ENCODE measurements at regions of chr2 and their contacts with region 1.

Region 1: DNA sequence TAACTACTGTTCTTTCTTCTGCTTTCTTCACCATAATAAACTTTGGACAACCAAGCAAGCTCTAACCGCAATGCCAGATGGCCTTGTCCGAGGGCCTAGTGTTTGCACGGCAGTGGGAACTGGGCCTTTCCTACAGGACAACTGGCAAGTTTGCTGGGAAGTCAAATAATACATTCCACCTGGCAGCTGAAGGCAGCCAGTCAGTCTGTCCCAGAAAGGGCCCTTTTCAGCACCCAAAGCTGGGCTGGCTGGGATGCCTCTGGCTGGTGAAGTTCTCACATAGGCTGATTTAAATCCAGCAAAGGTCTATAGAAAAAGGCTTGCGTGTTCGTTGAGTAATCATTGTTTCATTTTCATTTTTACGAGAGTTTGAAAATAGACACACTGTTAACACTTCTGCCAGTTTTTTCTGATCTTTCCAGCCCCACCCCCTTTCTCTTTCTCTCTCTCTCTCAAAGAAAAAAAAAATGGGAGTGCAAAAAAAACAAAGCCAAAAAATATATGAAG is 110.0 kb upstream of the EPAS1 start:
- DNase-seq: no peak
- H3K4me3 ChIP-seq: no peak overlapping the region
- H3K27ac ChIP-seq: no peak overlapping the region
- H3K4me1 ChIP-seq: no peaks in the 10 kb centered on the region
- H3K27me3 ChIP-seq: no peaks in the 10 kb centered on the region
- CTCF ChIP-seq: no peak
- EP300 ChIP-seq: no peak
- POLR2A ChIP-seq: no peak
- RAD21 ChIP-seq: no peak

Region 2: DNA sequence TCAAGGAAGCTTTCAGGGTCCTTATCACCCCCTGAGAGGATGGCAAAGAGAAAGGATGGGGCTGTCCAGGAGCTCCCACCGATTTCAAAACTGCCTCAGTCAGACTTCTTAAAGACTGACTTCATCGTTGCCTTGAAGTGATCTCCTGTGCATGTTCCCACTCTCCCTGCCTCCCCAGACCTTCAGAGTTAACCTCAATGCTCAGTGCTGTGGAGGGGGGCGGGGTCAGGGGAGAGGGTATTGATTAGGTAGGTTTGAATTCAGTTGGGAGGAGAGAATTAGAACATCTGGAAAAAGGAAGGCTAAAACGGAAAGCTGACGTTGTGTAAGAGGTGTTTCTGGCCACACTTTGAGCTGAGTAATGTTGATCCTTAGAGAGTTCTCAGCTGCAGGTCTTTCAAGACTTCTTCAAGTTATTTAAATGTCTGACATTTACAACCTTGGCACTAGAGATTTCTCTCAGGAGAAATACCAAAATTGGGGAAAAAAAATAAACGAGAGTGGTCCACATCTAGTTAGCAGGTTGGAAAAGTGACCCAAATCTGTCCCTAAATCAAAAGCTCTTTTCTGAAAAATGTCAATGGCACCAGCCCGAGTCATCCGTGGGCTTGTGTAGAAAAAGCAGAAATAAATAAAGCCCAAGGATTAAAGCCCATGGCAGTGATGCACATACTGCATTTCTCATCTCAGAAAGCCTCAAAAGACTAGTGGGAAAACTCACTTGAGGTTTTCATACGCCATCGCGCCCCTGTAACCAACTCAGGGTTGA is 24.7 kb before region 1 on chr2:
- CTCF ChIA-PET with region 1: interaction called, 11 read pairs
- POLR2A ChIA-PET with region 1: no interaction called
- DNase-seq: no peak
- H3K4me3 ChIP-seq: no peak overlapping the region
- H3K27ac ChIP-seq: no peak overlapping the region
- H3K4me1 ChIP-seq: no peaks in the 10 kb centered on the region
- H3K27me3 ChIP-seq: no peaks in the 10 kb centered on the region; a peak in 1 of 7 replicates
- CTCF ChIP-seq: no peak
- EP300 ChIP-seq: no peak
- POLR2A ChIP-seq: no peak
- RAD21 ChIP-seq: no peak

Region 3: DNA sequence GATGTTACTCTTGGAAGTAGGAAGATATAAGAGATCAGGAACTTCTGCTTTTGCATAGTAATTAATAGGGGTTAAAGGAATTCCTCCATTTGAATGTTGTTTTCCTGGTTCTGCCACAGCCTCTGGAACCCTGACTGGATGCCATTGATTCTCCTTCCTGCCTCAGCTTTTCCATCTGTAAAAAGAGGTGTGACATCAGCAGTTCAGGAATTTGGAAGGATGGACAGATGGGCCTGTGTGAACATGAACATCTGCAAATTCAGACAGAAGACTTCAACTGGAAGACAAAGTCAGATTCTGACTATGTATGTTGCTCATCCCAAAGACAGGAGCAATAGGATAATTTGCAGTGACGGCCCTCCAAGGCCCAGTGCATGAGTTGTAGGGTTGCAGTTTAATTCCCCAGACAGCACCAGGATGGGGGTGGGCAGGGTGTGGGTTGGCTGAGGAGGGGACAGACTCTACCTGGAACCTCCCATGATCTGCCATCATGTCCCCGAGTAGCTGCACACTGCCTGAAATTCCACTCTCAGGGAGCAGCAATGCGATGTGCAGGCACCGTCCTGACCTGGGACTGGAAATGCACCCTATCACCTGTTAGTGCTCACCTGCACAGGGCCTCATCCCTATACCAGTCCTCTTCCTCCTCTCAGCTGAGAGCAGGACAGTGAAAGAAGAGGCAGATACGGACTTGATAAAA is 11.1 kb after region 1 on chr2:
- CTCF ChIA-PET with region 1: interaction called, 10 read pairs
- POLR2A ChIA-PET with region 1: interaction called, 3 read pairs
- DNase-seq: no peak
- H3K4me3 ChIP-seq: no peak overlapping the region
- H3K27ac ChIP-seq: no peak overlapping the region
- H3K4me1 ChIP-seq: no peaks in the 10 kb centered on the region; a peak in 2 of 7 replicates
- H3K27me3 ChIP-seq: no peaks in the 10 kb centered on the region
- CTCF ChIP-seq: no peak
- EP300 ChIP-seq: no peak
- POLR2A ChIP-seq: no peak
- RAD21 ChIP-seq: no peak

Measured in H1 (cell line).